B cell (primary cell): ENCODE measurements at regions of chr6 and their contacts with region 1.

Region 1: GRCh38 chr6:135145063-135145800 is 35.9 kb upstream of the MYB start:
- DNase-seq: peak; percentile 48
- ATAC-seq: peak; percentile 53
- H3K4me3 ChIP-seq: peak overlapping the region in 3 of 5 experiments; percentile 20 to 37 (median 25)
- H3K4me3 Mint-ChIP-seq: peak overlapping the region; percentile 58
- H3K27ac ChIP-seq: no peak overlapping the region
- H3K27ac Mint-ChIP-seq: no peak overlapping the region
- H3K4me1 ChIP-seq: peaks cover 14 to 25% of the 10 kb centered on the region in 2 donors
- H3K4me1 Mint-ChIP-seq: peaks cover 39% of the 10 kb centered on the region
- H3K27me3 ChIP-seq: no peaks in the 10 kb centered on the region
- H3K27me3 Mint-ChIP-seq: no peaks in the 10 kb centered on the region
- CTCF ChIP-seq: peak; percentile 78

Region 2: DNA sequence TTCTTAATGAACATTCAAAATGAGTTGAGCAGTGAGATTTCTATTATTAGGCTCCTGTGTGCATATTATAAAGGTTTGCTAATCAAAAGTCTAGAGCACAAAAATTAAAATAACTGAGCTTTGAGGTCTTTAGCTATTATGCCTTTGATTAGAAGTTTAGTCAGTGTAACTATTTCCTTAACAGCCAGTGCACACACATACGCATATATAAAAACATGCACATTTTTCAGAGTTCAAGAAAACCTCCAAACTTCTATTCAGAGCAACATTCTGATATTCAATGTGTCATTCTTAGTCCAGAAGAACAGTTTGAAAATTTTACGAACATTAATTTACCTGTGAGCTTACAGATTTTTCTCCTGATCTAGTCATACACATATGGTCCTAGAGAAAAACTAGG is 12.5 kb before region 1 on chr6:
- CTCF ChIA-PET with region 1: interaction called, 14 read pairs
- POLR2A ChIA-PET with region 1: no interaction called
- intact Hi-C with region 1: no loop called
- DNase-seq: no peak
- ATAC-seq: no peak
- H3K4me3 ChIP-seq: no peak overlapping the region
- H3K4me3 Mint-ChIP-seq: no peak overlapping the region
- H3K27ac ChIP-seq: no peak overlapping the region
- H3K27ac Mint-ChIP-seq: no peak overlapping the region
- H3K4me1 ChIP-seq: peaks cover 13% of the 10 kb centered on the region in 2 donors
- H3K4me1 Mint-ChIP-seq: peaks cover 13% of the 10 kb centered on the region
- H3K27me3 ChIP-seq: no peaks in the 10 kb centered on the region
- H3K27me3 Mint-ChIP-seq: no peaks in the 10 kb centered on the region
- CTCF ChIP-seq: no peak

Region 3: DNA sequence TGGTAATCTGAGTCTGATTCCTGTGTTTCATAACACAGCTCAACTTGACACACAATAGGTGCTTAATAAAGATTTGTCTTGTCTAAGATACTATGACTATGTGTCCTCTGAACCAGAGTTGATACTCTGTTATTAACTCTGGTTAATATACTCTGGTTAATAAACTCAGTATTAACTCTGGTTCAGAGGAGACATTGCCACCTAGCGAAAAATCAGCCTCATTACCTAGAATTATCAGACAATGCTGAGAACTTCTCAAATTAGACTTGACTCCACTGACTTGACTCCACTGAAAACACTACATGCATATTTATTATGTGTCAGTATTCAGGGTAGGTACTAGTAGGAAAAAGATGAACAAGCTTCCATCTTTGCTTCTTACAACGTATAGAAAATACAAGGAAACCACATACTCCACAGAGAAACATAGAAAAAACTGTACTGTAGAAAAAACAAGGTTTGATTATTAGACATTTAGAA is 278.5 kb after region 1 on chr6:
- CTCF ChIA-PET with region 1: interaction called, 27 read pairs
- POLR2A ChIA-PET with region 1: no interaction called
- intact Hi-C with region 1: no loop called
- DNase-seq: peak; percentile 55
- ATAC-seq: peak; percentile 62
- H3K4me3 ChIP-seq: no peak overlapping the region
- H3K4me3 Mint-ChIP-seq: no peak overlapping the region
- H3K27ac ChIP-seq: no peak overlapping the region
- H3K27ac Mint-ChIP-seq: no peak overlapping the region
- H3K4me1 ChIP-seq: no peaks in the 10 kb centered on the region
- H3K4me1 Mint-ChIP-seq: no peaks in the 10 kb centered on the region
- H3K27me3 ChIP-seq: no peaks in the 10 kb centered on the region
- H3K27me3 Mint-ChIP-seq: no peaks in the 10 kb centered on the region
- CTCF ChIP-seq: peak; percentile 81

Region 4: DNA sequence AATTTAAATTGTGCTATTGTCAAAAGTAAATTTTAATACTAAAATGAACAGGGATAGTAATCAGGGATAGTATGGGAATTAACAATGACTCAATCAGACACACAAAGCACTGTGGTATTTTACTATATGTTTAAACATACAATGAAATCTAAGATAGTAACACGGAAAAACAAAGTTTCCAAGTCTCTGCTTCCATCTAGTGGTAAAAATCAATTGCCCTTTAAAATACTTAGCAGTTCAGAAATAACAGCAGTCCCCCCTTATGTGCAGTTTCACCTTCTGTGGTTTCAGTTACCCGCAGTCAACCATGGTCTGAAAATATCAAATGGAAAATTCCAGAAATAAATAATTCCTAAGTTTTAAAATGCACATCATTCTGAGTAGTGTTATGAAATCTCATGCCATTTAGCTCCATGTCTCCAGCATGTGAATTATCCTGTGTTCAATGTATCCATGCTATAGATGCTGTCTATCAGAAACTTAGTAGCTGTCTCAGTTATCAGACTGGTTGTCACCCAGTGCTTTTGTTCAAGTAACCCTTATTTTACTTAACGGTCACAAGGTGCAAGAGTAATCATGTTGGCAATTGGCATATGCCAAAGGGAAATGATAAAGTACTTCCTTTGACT is 293.8 kb after region 1 on chr6:
- CTCF ChIA-PET with region 1: interaction called, 18 read pairs
- POLR2A ChIA-PET with region 1: no interaction called
- intact Hi-C with region 1: loop called (anchors 1 kb)
- DNase-seq: peak; percentile 49
- ATAC-seq: peak; percentile 41
- H3K4me3 ChIP-seq: no peak overlapping the region
- H3K4me3 Mint-ChIP-seq: no peak overlapping the region
- H3K27ac ChIP-seq: no peak overlapping the region
- H3K27ac Mint-ChIP-seq: no peak overlapping the region
- H3K4me1 ChIP-seq: peaks cover 6 to 12% of the 10 kb centered on the region in 2 donors
- H3K4me1 Mint-ChIP-seq: peaks cover 25% of the 10 kb centered on the region
- H3K27me3 ChIP-seq: no peaks in the 10 kb centered on the region
- H3K27me3 Mint-ChIP-seq: no peaks in the 10 kb centered on the region
- CTCF ChIP-seq: peak; percentile 67